Dorsolateral prefrontal cortex (tissue), 120 donors: ENCODE measurements at regions of chrX and their contacts with region 1.

Region 1: GRCh38 chrX:110450050-110450449 is 91.4 kb downstream of the RTL9 start:
- DNase-seq: peak; percentile 57 to 91 (median 79)
- H3K4me3 ChIP-seq: no peak overlapping the region
- H3K27ac ChIP-seq: no peak overlapping the region
- H3K27me3 ChIP-seq: peaks cover 0 to 90% (median 31%) of the 10 kb centered on the region in 45 donors
- CTCF ChIP-seq: peak; percentile 44 to 91 (median 78)

Region 2: DNA sequence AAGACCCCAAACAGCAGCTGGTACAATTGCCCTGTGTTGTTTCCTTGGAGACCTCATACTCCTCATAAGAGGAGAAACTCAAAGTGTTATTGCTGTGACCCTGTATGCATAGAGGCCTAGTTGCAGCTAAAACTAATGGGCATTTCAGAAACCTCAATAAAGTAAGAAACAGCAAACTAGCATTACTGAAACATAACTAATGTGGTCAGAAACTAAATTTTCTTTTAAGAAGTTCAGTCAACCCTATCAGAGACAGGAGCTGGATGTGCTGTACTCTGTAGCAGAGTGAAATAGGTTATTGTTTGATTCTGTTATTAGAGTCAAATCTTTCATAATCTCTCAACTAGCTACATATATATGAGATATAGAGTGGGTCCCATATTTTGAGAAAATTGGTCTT is 1456.1 kb before region 1 on chrX:
- intact Hi-C with region 1: no loop called
- DNase-seq: no peak
- H3K4me3 ChIP-seq: no peak overlapping the region
- H3K27ac ChIP-seq: no peak overlapping the region
- H3K27me3 ChIP-seq: peaks cover 0 to 77% (median 22%) of the 10 kb centered on the region in 45 donors
- CTCF ChIP-seq: no peak

Region 3: GRCh38 chrX:110665223-110666002 is 215.4 kb after region 1 on chrX:
- intact Hi-C with region 1: loop called in 1 of 2 experiments (anchors 5 kb)
- DNase-seq: peak in 3 of 10 donors; percentile 10 to 28 (median 14)
- H3K4me3 ChIP-seq: no peak overlapping the region
- H3K27ac ChIP-seq: no peak overlapping the region
- H3K27me3 ChIP-seq: peaks cover 0 to 56% (median 15%) of the 10 kb centered on the region in 45 donors
- CTCF ChIP-seq: peak in 49 of 56 donors; percentile 11 to 56 (median 35)

Region 4: GRCh38 chrX:110847334-110847733 is 397.3 kb after region 1 on chrX:
- intact Hi-C with region 1: loop called (anchors 1 to 5 kb)
- DNase-seq: peak in 1 of 10 donors; percentile 4
- H3K4me3 ChIP-seq: no peak overlapping the region
- H3K27ac ChIP-seq: no peak overlapping the region
- H3K27me3 ChIP-seq: peaks cover 0 to 86% (median 25%) of the 10 kb centered on the region in 45 donors
- CTCF ChIP-seq: peak; percentile 49 to 91 (median 75)